Naive thymus-derived CD8-positive, alpha-beta T cell (primary cell): ENCODE measurements at regions of chrX and their contacts with region 1.

Region 1: DNA sequence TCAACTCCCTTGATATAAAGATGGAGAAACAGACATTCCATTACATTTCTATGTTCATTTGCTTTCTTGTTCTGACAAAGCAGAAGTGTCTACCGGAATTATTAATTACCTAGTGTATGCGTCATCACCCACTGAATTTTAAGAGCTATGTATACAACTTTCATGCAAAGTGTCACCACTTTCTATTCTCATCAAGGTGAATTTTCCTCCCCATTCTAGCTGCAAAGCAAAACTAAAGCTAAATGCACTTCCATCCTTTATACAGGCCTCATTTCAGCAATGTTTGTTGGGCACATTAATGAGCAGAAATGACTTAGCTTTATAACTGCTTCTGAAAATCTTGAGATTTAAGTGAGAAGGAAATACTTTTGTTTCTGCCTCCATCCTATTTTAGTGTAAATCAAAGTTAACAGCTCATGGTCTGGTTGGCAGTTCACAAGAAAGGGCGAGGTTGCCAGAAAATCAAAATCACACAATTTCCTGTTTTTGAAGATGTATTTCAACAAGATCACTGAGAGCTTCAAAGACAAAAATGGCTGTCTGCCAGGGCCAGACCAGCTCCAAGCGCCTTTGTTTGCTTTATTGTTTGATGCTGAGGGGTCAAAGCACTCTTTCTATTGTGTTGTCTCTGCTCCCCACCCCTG is 7.2 kb upstream of the FAM9C start:
- DNase-seq: peak; percentile 21 to 83 (median 58)
- ATAC-seq: peak; percentile 77 to 84
- H3K4me3 Mint-ChIP-seq: peak overlapping the region; percentile 14 to 72 (median 56)
- H3K27ac Mint-ChIP-seq: peak overlapping the region; percentile 90 to 98 (median 94)
- H3K4me1 Mint-ChIP-seq: peaks cover 16 to 84% (median 74%) of the 10 kb centered on the region in 4 donors
- H3K27me3 Mint-ChIP-seq: no peaks in the 10 kb centered on the region

Region 2: GRCh38 chrX:12946838-12947544 is 104.7 kb before region 1 on chrX:
- POLR2A ChIA-PET with region 1: interaction called, 10 read pairs
- DNase-seq: peak; percentile 38 to 95 (median 73)
- ATAC-seq: peak in 1 of 2 donors; percentile 11
- H3K4me3 Mint-ChIP-seq: peak overlapping the region; percentile 19 to 82 (median 68)
- H3K27ac Mint-ChIP-seq: peak overlapping the region; percentile 37 to 99 (median 96)
- H3K4me1 Mint-ChIP-seq: peaks cover 10 to 57% (median 50%) of the 10 kb centered on the region in 4 donors
- H3K27me3 Mint-ChIP-seq: no peaks in the 10 kb centered on the region

Region 3: DNA sequence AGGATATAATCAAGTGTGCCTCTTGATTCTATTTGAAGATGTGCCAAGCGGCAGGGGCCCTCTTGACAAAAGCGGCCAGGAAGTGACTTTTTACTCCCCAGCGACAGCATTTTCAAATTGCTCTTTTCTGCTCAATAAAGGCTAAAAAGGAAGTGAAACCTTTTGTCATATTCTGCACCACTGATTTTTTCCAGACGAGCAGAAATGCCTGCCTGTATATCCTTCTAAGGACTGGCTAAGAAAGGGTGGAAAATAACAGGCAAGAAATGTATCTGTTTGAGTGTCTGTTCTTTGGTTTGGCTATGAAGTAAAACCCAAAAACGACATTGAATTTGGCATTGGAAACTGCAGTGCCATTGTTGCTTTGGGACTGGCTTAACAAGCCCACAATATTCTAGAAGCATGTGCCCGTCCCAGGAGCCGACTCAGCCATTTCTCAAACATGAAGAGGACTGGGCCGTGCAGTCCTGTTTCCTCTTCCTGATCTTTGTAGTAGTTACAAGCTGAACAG is 51.3 kb before region 1 on chrX:
- POLR2A ChIA-PET with region 1: interaction called, 26 read pairs
- DNase-seq: peak in 7 of 10 donors; percentile 32 to 79 (median 54)
- ATAC-seq: peak; percentile 61 to 68
- H3K4me3 Mint-ChIP-seq: peak overlapping the region; percentile 65 to 90 (median 82)
- H3K27ac Mint-ChIP-seq: peak overlapping the region; percentile 83 to 100 (median 96)
- H3K4me1 Mint-ChIP-seq: peaks cover 9 to 77% (median 62%) of the 10 kb centered on the region in 4 donors
- H3K27me3 Mint-ChIP-seq: no peaks in the 10 kb centered on the region

Region 4: DNA sequence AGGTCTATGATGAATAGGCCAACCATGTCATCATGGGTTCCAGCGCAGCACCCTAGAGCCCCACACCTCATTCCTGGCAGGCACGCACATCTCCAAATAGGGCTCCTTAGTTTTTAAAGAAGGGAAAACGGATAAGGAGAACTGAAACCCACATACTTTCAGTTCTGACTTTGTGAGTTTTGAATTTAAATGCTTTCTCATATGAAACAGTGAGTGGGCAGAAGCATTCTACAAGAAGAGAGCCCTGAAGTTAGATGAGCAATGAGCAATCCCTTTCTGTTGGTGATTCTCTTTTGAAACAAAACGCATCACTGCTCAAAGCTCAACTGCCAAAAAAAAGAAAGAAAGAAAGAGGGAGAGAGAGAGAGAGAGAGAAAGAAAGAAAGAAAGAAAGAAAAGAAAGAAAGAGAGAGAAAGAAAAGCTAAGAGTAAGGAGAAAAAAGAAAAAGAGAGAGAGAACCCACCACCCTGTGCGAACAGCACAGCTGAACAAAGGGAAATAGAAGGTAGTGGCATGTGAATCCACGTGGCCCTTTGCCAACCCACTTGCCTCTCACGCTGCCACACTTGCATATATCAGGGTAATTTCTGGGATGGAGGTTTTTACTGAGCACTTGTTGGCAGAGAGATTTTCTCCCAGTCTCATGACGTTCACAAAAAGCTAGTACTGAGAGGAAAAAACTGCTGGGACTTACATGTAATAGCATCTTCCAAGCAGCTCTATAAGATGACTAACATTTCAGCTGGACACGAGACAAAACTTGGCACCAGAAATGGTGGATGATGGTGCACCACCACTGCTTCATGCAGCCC is 45.8 kb before region 1 on chrX:
- POLR2A ChIA-PET with region 1: interaction called, 26 read pairs
- DNase-seq: peak in 2 of 10 donors; percentile 6 to 28
- ATAC-seq: peak; percentile 70
- H3K4me3 Mint-ChIP-seq: peak overlapping the region; percentile 52 to 95 (median 84)
- H3K27ac Mint-ChIP-seq: peak overlapping the region; percentile 90 to 100 (median 96)
- H3K4me1 Mint-ChIP-seq: peaks cover 18 to 77% (median 59%) of the 10 kb centered on the region in 4 donors
- H3K27me3 Mint-ChIP-seq: no peaks in the 10 kb centered on the region

Region 5: DNA sequence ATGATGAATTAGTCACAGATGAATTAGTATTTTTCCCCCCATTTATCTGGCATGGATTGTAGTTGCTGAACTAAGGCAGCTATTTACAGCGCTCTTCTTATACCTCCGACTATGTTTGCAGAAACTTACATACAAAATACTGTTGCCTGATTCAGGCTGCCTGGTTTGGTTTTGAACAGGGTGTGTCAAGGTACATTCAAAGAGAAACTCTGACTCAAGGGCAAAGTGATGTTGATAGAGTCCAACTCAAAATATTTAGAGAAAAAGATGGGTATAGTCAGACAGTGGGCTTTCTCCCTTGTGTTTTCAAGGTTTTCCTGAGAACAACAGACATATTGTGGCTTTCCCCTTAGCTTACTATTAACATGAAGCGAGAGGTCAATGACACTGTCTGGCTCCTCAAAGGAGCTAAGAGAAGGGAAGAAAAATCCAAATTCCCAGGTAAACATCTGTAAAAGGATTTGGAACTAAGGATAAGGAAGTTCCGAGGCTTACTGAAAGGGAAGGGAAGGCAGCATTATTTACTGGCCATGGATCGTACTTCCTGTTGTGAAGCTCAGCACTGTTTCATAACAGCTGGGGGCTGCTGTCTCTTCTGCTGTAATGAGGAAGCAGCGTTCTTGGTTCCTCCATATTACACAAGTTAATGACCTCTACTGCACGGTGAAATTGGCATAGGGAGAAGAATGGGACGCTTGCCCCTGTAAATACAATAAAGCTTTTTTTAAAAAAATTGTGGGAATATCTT is 38.1 kb before region 1 on chrX:
- POLR2A ChIA-PET with region 1: interaction called, 18 read pairs
- DNase-seq: peak in 2 of 10 donors; percentile 26 to 34
- ATAC-seq: peak; percentile 82 to 84
- H3K4me3 Mint-ChIP-seq: peak overlapping the region; percentile 1 to 71 (median 56)
- H3K27ac Mint-ChIP-seq: peak overlapping the region; percentile 35 to 99 (median 89)
- H3K4me1 Mint-ChIP-seq: peaks cover 10 to 70% (median 60%) of the 10 kb centered on the region in 4 donors
- H3K27me3 Mint-ChIP-seq: no peaks in the 10 kb centered on the region

Region 6: GRCh38 chrX:13029341-13029740 is 22.3 kb before region 1 on chrX:
- POLR2A ChIA-PET with region 1: interaction called, 59 read pairs
- DNase-seq: peak in 2 of 10 donors; percentile 6 to 23
- ATAC-seq: peak; percentile 30 to 43
- H3K4me3 Mint-ChIP-seq: peak overlapping the region in 9 of 10 donors; percentile 39 to 80 (median 67)
- H3K27ac Mint-ChIP-seq: peak overlapping the region; percentile 80 to 98 (median 93)
- H3K4me1 Mint-ChIP-seq: peaks cover 27 to 79% (median 65%) of the 10 kb centered on the region in 4 donors
- H3K27me3 Mint-ChIP-seq: no peaks in the 10 kb centered on the region

Region 7: DNA sequence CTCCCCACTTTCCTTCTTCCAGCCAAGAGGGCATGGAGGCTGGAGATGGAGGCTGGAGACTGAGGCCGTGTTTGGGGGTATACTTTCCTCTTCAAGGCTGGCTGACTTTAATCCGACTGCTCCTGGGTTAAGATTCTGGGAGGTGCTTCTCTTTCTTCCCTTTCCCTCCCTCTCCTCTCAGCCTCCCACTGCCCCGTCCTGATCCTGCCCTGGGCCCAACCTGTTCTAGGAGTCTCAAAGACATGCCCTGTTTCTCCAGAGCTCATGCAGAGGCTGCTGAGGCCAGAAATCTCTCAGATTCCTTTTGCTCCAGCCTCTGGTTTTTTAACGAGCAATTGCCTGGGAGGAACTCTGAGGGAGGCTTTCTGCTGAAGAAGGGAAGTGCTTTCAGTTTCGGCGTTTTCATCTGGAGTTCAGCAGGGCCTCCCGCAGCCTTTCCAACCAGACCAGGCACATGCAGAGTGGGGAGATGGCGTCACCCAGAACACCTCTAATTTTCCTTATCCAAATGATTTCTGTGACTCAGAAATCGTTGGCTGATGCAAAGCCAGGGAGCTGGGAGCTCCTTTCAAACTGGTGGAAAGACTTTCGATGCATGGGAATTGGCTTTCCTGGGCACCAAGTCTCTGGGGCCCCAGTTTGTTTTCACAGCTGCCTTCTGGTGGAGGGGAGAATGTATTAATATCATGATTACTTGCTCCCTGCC is 27.2 kb after region 1 on chrX:
- POLR2A ChIA-PET with region 1: interaction called, 158 read pairs
- DNase-seq: peak in 1 of 10 donors; percentile 12
- ATAC-seq: no peak
- H3K4me3 Mint-ChIP-seq: peak overlapping the region; percentile 48 to 77 (median 66)
- H3K27ac Mint-ChIP-seq: peak overlapping the region; percentile 92 to 97 (median 94)
- H3K4me1 Mint-ChIP-seq: peaks cover 24 to 92% (median 86%) of the 10 kb centered on the region in 4 donors
- H3K27me3 Mint-ChIP-seq: no peaks in the 10 kb centered on the region